ENCODE measurements at regions of chr2 and their contacts with region 1.

Region 1: DNA sequence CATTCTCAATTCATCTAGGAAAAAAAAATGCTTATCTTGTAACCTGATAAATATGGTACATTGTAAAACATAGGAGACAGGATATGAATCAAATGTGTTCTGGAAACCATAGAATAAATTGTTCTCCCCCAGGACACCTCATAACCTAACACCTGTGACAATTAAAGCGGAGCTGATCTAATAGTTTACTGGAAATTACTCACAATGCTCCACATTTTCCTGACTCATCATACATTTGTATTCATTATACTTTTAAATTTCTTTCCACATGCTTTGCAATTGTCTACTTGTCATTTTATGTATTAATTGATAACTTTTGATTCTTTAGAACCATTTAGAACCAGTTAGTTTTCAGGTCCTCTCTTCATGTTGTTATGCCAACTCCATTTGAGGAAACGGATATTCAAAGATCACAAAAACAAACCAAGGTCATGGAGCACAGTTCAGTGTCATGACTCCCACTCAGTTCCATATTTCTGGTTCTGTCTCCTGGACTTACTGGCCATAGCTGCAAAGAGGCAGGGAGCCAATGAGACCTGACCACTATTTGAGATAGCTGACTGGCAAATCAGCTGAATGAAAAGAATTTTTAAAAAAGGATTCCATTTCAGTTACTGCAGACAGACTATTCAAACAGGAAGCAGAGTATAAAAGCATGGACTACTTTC is 128.5 kb downstream of the CALCRL start:
- DNase-seq: no peak
- ATAC-seq: no peak
- H3K4me3 ChIP-seq: no peak overlapping the region
- H3K27ac ChIP-seq: no peak overlapping the region
- H3K4me1 ChIP-seq: no peaks in the 10 kb centered on the region
- H3K27me3 ChIP-seq: no peaks in the 10 kb centered on the region
- CTCF ChIP-seq: no peak
- EP300 ChIP-seq: no peak
- POLR2A ChIP-seq: no peak
- RAD21 ChIP-seq: no peak

Region 2: DNA sequence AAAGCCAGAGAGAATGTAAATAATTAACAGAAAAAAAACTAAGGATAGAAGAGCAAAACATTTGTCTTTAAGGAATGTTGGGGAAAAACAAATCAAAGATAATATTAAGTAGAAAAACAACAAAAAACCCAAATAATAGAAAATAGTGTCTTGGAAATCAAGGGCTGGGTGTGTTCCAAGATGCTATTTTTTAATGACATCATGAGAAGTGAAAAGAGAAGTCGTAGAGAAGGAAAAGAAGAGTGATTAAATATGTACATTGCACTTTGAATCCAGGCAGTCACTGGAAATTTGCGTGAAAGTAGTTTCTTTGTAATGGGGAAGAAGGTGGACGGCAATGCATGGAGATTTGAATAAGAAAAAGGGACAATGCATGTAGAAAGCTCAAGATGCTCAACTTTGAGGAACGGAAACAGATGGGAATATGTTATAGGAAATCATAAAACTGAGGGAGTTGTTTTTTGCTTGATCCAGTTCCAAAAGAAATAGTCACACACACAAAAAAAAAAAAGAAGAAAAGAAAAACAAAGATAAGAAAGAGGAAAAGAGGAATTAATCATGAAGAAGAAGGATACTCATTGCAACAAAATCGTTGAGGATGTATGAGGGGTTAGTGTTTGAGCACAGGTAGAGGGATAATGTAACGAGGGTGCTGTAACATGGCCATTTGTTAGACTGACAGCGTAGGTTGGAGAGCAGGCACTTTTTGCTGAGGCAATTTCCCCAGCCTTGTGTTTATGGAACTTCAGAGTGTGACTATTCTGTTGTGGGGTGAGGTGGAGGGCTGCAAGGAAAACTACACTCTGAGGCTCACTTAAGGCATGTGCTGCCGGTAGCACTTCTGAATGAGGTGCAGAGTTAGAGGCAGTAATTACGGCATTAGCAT is 55.7 kb before region 1 on chr2:
- CTCF ChIA-PET with region 1: no interaction called
- POLR2A ChIA-PET with region 1: no interaction called
- in situ Hi-C with region 1: no loop called
- intact Hi-C with region 1: loop called (anchors 1 kb)
- DNase-seq: peak in 1 of 4 experiments; percentile 2
- ATAC-seq: no peak; the same call in 2 of the 3 replicates
- H3K4me3 ChIP-seq: no peak overlapping the region
- H3K27ac ChIP-seq: peak overlapping the region; percentile 44; the same call in 1 of the 3 replicates
- H3K4me1 ChIP-seq: no peaks in the 10 kb centered on the region
- H3K27me3 ChIP-seq: no peaks in the 10 kb centered on the region
- CTCF ChIP-seq: no peak
- EP300 ChIP-seq: no peak
- POLR2A ChIP-seq: no peak
- RAD21 ChIP-seq: no peak

Region 3: GRCh38 chr2:187294043-187294442 is 25.5 kb before region 1 on chr2:
- CTCF ChIA-PET with region 1: no interaction called
- POLR2A ChIA-PET with region 1: no interaction called
- in situ Hi-C with region 1: no loop called
- intact Hi-C with region 1: no loop called
- DNase-seq: no peak
- ATAC-seq: no peak
- H3K4me3 ChIP-seq: no peak overlapping the region
- H3K27ac ChIP-seq: no peak overlapping the region
- H3K4me1 ChIP-seq: no peaks in the 10 kb centered on the region
- H3K27me3 ChIP-seq: no peaks in the 10 kb centered on the region
- CTCF ChIP-seq: no peak
- EP300 ChIP-seq: no peak
- POLR2A ChIP-seq: no peak
- RAD21 ChIP-seq: no peak

Region 4: GRCh38 chr2:187360286-187360685 is 40.7 kb after region 1 on chr2:
- CTCF ChIA-PET with region 1: no interaction called
- POLR2A ChIA-PET with region 1: no interaction called
- in situ Hi-C with region 1: no loop called
- intact Hi-C with region 1: no loop called
- DNase-seq: no peak
- ATAC-seq: no peak
- H3K4me3 ChIP-seq: no peak overlapping the region
- H3K27ac ChIP-seq: no peak overlapping the region
- H3K4me1 ChIP-seq: no peaks in the 10 kb centered on the region
- H3K27me3 ChIP-seq: no peaks in the 10 kb centered on the region
- CTCF ChIP-seq: no peak
- EP300 ChIP-seq: no peak
- POLR2A ChIP-seq: no peak
- RAD21 ChIP-seq: no peak